ENCODE measurements at regions of chr11 and their contacts with region 1.

Region 1: DNA sequence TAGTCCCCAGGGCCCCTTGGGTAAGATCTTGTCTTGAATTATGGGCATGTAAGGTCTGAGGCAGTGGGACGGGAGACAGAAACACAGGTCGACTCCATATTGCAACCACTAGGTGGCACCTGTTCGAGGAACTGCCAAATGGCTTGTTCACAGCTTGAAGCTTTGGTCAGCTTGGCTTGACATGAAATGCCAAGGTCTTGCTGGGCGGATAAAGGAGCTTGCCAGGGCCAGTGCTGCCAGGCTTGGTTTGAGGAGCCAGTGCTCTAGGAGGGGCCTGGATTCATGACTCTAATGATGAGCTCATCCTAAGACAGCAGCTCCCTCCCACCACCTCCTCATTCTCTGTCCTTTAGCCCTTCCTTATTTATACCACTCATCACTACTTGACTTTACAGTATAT is 11.9 kb upstream of the NRIP3 start:
- DNase-seq: peak; percentile 31
- ATAC-seq: peak; percentile 99
- H3K4me3 ChIP-seq: no peak overlapping the region
- H3K27ac ChIP-seq: no peak overlapping the region
- H3K4me1 ChIP-seq: no peaks in the 10 kb centered on the region; the same call in none of the 2 replicates
- H3K27me3 ChIP-seq: no peaks in the 10 kb centered on the region; a peak in 1 of 4 replicates
- CTCF ChIP-seq: peak; percentile 77 to 90 (median 81)
- EP300 ChIP-seq: no peak
- POLR2A ChIP-seq: no peak
- RAD21 ChIP-seq: peak; percentile 77

Region 2: DNA sequence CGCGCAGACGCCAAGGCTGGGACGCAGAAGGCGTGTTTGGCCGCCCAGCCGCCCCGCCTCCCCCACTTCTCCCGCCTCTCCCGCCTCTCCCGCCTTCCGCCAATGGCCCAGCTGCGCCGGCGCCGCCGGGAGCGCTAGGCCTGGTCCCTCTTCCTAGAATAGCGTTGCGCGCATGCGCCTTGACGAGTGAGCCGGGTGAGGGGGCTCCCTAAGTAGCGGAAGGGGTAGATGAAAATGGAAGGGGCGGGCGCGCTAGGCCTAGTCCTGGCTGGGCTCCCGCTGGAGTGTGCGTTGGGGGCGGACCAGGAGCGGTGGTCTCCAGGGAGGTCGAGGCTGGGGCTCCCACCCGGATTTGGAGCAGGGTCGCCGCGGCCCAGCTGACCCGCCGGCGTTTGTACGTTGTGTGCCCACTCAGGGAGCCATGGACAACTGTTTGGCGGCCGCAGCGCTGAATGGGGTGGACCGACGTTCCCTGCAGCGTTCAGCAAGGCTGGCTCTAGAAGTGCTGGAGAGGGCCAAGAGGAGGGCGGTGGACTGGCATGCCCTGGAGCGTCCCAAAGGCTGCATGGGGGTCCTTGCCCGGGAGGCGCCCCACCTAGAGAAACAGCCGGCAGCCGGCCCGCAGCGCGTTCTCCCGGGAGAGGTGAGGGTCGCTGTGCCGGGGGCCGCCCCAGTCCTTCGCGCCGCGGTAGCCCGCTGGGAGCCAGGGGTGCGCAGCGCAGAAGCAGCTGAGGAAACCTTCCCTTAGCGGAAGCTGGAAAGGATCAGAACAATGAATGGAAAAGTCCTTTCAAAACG is 104.4 kb before region 1 on chr11 and contains the start of gene AKIP1:
- CTCF ChIA-PET with region 1: interaction called, 9 read pairs
- POLR2A ChIA-PET with region 1: no interaction called
- RAD21 ChIA-PET with region 1: interaction called, 3 read pairs
- SMC1A ChIA-PET with region 1: interaction called, 3 read pairs
- in situ Hi-C with region 1: no loop called
- intact Hi-C with region 1: loop called (anchors 2 kb)
- DNase-seq: peak; percentile 65
- ATAC-seq: peak; percentile 88
- H3K4me3 ChIP-seq: peak within 1 kb of the TSS; percentile 95
- H3K27ac ChIP-seq: peak within 1 kb of the TSS; percentile 65
- H3K4me1 ChIP-seq: peaks cover 11% of the 10 kb centered on the region
- H3K27me3 ChIP-seq: no peaks in the 10 kb centered on the region; a peak in 1 of 4 replicates
- CTCF ChIP-seq: no peak
- EP300 ChIP-seq: no peak
- POLR2A ChIP-seq: peak; percentile 61; the same call in 1 of the 2 replicates
- RAD21 ChIP-seq: no peak
- polyA plus RNA-seq, gene AKIP1: 5.1 to 14.7 TPM

Region 3: GRCh38 chr11:8989453-8989852 is 26.2 kb before region 1 on chr11:
- CTCF ChIA-PET with region 1: no interaction called
- POLR2A ChIA-PET with region 1: no interaction called
- RAD21 ChIA-PET with region 1: no interaction called
- SMC1A ChIA-PET with region 1: no interaction called
- in situ Hi-C with region 1: no loop called
- intact Hi-C with region 1: no loop called
- DNase-seq: no peak
- ATAC-seq: no peak
- H3K4me3 ChIP-seq: no peak overlapping the region
- H3K27ac ChIP-seq: no peak overlapping the region
- H3K4me1 ChIP-seq: no peaks in the 10 kb centered on the region
- H3K27me3 ChIP-seq: peaks cover 0 to 2% of the 10 kb centered on the region in 2 experiments; a peak in 1 of 4 replicates
- CTCF ChIP-seq: no peak
- EP300 ChIP-seq: no peak
- POLR2A ChIP-seq: no peak
- RAD21 ChIP-seq: no peak

Region 4: DNA sequence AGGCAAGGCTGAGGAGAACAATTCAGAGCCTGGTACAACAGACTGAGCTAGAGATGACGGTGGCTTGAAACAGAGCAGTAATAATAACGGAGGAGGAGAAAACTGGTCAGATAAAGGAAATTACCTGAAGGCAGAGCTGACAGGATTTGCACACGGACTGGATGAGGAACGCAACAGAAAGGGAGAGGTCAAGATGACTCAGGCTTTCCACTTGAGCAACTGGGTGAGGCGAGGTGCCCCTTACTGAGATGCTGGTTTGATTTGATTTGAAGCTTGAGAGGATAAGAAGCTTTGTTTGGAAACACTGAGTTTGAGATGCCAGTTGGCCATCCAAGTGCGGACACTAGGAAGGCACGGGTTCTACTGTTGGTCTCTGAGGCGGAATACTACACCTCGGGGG is 23.5 kb after region 1 on chr11:
- CTCF ChIA-PET with region 1: interaction called, 36 read pairs
- POLR2A ChIA-PET with region 1: no interaction called
- RAD21 ChIA-PET with region 1: interaction called, 3 read pairs
- SMC1A ChIA-PET with region 1: interaction called, 4 read pairs
- in situ Hi-C with region 1: no loop called
- intact Hi-C with region 1: no loop called
- DNase-seq: peak; percentile 19
- ATAC-seq: peak; percentile 92
- H3K4me3 ChIP-seq: no peak overlapping the region
- H3K27ac ChIP-seq: no peak overlapping the region
- H3K4me1 ChIP-seq: no peaks in the 10 kb centered on the region
- H3K27me3 ChIP-seq: no peaks in the 10 kb centered on the region; a peak in 1 of 4 replicates
- CTCF ChIP-seq: no peak
- EP300 ChIP-seq: no peak
- POLR2A ChIP-seq: no peak
- RAD21 ChIP-seq: no peak

Region 5: DNA sequence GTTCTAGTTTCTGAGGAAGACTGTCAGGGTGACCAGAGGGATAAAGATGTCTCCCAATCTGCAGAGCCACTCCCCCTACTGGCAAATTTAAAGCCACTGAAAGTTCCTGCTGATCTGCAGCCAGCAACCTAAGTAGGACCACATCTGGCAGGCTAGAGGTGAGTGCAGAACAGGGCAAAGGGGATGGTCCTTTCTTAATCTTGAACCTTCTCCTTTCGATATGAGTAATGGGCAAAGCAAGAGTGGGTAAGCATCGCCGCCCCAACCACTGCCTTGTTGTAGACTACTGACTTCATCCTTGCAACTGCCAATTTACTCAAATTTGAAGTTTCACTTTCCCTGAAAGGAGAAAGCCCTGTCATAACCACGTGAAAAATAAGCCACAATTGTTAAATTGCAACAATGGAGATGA is 45.0 kb after region 1 on chr11:
- CTCF ChIA-PET with region 1: interaction called, 22 read pairs
- POLR2A ChIA-PET with region 1: no interaction called
- RAD21 ChIA-PET with region 1: interaction called, 3 read pairs
- SMC1A ChIA-PET with region 1: interaction called, 29 read pairs
- in situ Hi-C with region 1: no loop called
- intact Hi-C with region 1: loop called (anchors 2 kb)
- DNase-seq: peak; percentile 97
- ATAC-seq: peak; percentile 99
- H3K4me3 ChIP-seq: no peak overlapping the region
- H3K27ac ChIP-seq: no peak overlapping the region
- H3K4me1 ChIP-seq: peaks cover 16% of the 10 kb centered on the region
- H3K27me3 ChIP-seq: no peaks in the 10 kb centered on the region
- CTCF ChIP-seq: peak; percentile 41 to 47 (median 46); a peak in 4 of 6 replicates
- EP300 ChIP-seq: peak; percentile 92 to 98
- POLR2A ChIP-seq: no peak
- RAD21 ChIP-seq: no peak; the same call in 1 of the 2 replicates

Region 6: DNA sequence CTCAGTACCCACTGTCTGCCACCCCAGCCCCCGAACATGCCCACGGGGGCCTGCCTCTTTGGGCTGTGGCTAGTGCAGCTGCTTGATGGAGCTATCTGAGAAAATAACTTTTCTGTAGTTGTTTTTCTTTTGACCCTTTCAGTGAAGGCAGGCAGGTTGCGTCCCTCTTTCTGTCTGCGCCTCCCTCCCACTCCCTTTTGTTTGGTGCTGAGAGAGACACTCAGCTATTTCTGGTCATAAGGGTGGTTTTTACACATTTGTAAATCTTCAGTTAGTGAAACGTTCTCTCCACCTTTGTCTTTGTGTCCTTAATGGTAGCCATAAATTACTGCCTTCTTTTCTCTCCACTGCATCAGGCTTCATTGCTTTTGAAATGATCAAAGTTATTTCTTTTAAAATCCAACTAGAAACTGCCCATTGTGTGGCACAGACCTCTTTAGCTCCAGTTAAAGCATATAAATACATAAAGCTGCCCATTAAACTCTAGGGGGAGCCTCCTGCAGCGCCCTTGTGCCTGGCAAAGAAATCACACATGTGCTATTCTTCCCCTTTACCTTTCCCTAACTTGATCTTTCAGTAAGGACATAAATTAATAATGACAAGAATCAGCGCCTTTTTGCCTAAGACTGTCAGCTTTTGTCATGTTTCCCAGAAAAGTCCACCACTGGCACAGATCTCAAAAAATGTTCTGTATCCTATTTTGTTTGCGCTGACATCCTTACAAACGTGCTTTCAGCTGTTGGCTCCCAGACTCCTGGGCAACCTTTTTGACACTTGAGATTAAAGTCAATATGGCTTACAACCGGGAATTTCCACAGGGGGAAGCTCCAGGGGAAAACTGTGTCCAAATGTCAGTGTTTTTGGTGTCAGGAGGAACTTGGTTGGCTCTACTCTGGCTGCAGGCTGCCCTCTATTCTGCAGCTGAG is 77.4 kb after region 1 on chr11:
- CTCF ChIA-PET with region 1: interaction called, 107 read pairs
- POLR2A ChIA-PET with region 1: no interaction called
- RAD21 ChIA-PET with region 1: interaction called, 47 read pairs
- SMC1A ChIA-PET with region 1: interaction called, 48 read pairs
- in situ Hi-C with region 1: no loop called
- intact Hi-C with region 1: loop called (anchors 10 kb)
- DNase-seq: no peak
- ATAC-seq: peak; percentile 46; the same call in 2 of the 3 replicates
- H3K4me3 ChIP-seq: no peak overlapping the region
- H3K27ac ChIP-seq: no peak overlapping the region
- H3K4me1 ChIP-seq: no peaks in the 10 kb centered on the region
- H3K27me3 ChIP-seq: peaks cover 13 to 26% of the 10 kb centered on the region in 2 experiments
- CTCF ChIP-seq: peak; percentile 23 to 31 (median 24); a peak in 3 of 6 replicates
- EP300 ChIP-seq: no peak
- POLR2A ChIP-seq: no peak
- RAD21 ChIP-seq: no peak

Region 7: DNA sequence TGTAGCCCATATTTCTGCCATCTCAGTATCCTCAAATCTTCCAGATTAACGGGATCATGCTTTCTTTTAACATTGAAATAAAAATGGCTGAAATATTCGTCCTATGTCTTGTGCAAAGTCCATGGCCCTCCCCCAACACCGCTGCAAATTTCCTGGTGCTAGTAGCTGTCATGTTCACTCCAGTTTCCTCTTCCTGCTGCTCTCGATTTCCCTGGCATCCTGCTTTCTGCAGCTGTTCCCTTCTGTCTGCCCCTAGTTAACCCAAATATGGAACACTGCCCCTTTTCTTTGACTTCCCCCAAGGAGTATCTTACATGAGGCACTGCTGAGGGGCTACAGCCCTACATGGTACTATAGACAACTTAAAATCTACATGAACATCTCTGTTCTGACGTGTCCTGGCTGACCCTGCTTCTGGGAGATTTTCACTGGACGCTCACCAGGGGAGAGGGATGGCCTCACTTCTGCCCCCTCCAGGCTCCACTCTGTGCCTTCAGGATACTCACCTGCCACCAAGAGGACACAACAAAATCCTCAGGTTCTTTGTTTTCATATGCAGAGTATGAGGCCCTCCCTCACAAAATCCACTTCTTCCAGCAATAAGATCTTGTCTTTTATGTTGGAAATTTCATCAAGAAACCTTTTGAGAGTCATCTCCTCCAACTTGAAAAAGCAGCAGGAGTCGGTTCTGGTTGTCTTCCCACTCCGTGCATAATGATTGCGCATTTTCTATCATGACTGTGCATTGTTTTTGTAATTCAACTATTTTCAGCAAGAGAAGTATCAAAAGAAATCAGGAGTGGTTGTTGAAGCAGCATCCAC is 105.2 kb after region 1 on chr11:
- CTCF ChIA-PET with region 1: interaction called, 9 read pairs
- POLR2A ChIA-PET with region 1: no interaction called
- RAD21 ChIA-PET with region 1: no interaction called
- SMC1A ChIA-PET with region 1: interaction called, 12 read pairs
- in situ Hi-C with region 1: no loop called
- intact Hi-C with region 1: no loop called
- DNase-seq: no peak
- ATAC-seq: peak; percentile 70
- H3K4me3 ChIP-seq: no peak overlapping the region
- H3K27ac ChIP-seq: no peak overlapping the region
- H3K4me1 ChIP-seq: no peaks in the 10 kb centered on the region
- H3K27me3 ChIP-seq: no peaks in the 10 kb centered on the region
- CTCF ChIP-seq: peak; percentile 18 to 20 (median 19); a peak in 3 of 6 replicates
- EP300 ChIP-seq: no peak
- POLR2A ChIP-seq: no peak
- RAD21 ChIP-seq: peak; percentile 19; the same call in 1 of the 2 replicates

Region 8: DNA sequence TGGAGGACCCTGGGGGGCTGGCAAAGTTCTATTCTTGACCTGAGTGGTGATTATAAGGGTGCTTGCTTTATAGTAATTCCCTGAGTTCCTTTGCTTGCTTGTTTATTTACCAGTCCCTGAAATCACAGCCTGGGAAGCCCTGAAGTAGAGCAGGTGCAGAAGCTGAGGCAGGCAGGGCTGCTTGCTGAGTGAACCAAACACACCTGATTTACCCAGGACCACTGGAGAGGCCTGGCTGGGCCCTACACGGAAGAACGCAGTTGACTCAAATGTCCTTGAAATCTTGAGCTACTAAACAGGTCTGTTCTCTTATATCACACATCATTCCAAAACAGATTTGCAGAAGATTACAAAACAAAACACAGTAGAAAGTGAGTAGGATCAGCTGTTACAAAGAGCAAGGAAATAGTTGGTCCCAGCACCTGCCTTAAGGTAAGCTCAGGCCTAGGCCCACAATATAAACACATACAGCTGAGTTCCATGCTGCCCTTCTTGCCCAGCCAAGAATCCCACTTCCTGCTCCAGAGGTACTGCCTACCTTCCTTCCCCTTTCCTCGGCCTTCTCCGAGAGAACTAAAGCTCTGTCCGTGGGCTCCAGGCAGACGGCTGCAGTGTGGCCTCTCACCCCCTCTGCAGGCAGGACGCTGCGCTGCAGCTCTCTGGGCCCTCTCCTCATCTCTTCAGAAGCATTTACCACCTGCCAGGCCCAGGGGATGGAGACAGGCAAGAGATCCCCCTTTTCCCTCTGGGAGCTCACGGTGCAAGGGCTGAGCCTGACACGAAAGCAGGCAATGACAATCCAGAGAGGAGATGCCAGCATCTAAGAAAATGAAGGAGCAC is 121.8 kb after region 1 on chr11:
- CTCF ChIA-PET with region 1: interaction called, 323 read pairs
- POLR2A ChIA-PET with region 1: no interaction called
- RAD21 ChIA-PET with region 1: interaction called, 106 read pairs
- SMC1A ChIA-PET with region 1: interaction called, 95 read pairs
- in situ Hi-C with region 1: loop called (anchors 5 kb)
- intact Hi-C with region 1: loop called (anchors 1 kb)
- DNase-seq: peak; percentile 27
- ATAC-seq: peak; percentile 100
- H3K4me3 ChIP-seq: no peak overlapping the region
- H3K27ac ChIP-seq: no peak overlapping the region
- H3K4me1 ChIP-seq: no peaks in the 10 kb centered on the region
- H3K27me3 ChIP-seq: no peaks in the 10 kb centered on the region
- CTCF ChIP-seq: peak; percentile 91 to 99 (median 97)
- EP300 ChIP-seq: no peak
- POLR2A ChIP-seq: no peak
- RAD21 ChIP-seq: peak; percentile 95